Naive thymus-derived CD4-positive, alpha-beta T cell (primary cell): ENCODE measurements at regions of chr17 and their contacts with region 1.

Region 1: DNA sequence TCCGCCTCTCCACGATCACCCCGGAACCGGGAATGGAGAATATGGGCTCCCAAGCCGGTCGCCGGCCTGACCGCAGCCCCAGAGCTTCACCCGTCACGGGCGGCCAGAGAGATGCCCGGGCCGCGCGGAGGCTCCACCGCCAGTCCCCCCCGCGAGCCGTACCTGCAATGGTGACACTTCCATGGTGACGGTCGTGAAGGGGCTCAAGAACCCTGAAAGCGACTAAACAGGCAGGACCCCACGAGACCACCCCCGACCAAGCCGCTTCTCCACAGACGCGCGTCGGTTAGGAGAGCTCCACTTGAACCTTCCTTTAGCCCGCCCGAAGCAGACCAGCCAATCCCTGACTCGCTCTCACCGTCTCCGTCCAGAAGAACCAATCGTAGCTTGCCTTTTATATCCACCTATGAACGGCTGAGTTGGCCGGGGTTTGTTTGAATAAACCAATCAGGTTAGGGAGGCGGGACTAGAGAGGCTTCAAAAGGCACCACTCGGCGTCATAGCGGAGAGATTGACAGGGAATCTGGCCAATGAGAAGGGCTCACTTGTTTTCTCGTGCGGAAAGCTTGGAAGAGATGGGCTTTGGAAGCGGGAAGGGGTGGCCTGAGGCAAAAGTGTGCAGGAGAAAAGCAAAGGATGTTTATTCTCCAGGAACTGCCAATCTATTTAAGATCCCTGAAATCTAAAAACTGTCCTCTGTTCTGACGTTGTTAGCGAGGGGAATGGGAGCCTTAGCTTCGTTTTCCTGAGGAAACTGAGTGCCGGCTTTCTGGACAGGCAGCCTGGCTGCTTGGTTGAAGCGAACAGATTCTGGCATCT is at the start of gene TOP2A:
- DNase-seq: peak; percentile 92 to 98 (median 98)
- ATAC-seq: peak; percentile 100
- H3K4me3 ChIP-seq: peak within 1 kb of the TSS; percentile 96
- H3K4me3 Mint-ChIP-seq: peak within 1 kb of the TSS; percentile 87 to 99 (median 92)
- H3K27ac ChIP-seq: peak within 1 kb of the TSS; percentile 71
- H3K27ac Mint-ChIP-seq: peak within 1 kb of the TSS; percentile 75 to 97 (median 90)
- H3K4me1 ChIP-seq: peaks cover 0 to 16% of the 10 kb centered on the region in 2 donors
- H3K4me1 Mint-ChIP-seq: peaks cover 6 to 41% (median 23%) of the 10 kb centered on the region in 7 donors
- H3K27me3 ChIP-seq: peaks cover 0 to 5% of the 10 kb centered on the region in 2 donors
- H3K27me3 Mint-ChIP-seq: peaks cover 0 to 2% (median 0%) of the 10 kb centered on the region in 5 donors
- total RNA-seq, gene TOP2A: 0.54 to 273 (median 1.2) TPM

Region 2: GRCh38 chr17:40287494-40288369 is 130.1 kb before region 1 on chr17 and contains the start of gene CDC6:
- CTCF ChIA-PET with region 1: no interaction called
- POLR2A ChIA-PET with region 1: interaction called, 3 read pairs
- intact Hi-C with region 1: loop called in 1 of 2 experiments (anchors 5 kb)
- DNase-seq: peak; percentile 90 to 99 (median 98)
- ATAC-seq: peak; percentile 97
- H3K4me3 ChIP-seq: peak within 1 kb of the TSS; percentile 70
- H3K4me3 Mint-ChIP-seq: peak within 1 kb of the TSS; percentile 93 to 99 (median 96)
- H3K27ac ChIP-seq: peak within 1 kb of the TSS; percentile 63
- H3K27ac Mint-ChIP-seq: peak within 1 kb of the TSS; percentile 84 to 98 (median 91)
- H3K4me1 ChIP-seq: peaks cover 3 to 11% of the 10 kb centered on the region in 2 donors
- H3K4me1 Mint-ChIP-seq: peaks cover 8 to 41% (median 22%) of the 10 kb centered on the region in 7 donors
- H3K27me3 ChIP-seq: no peaks in the 10 kb centered on the region
- H3K27me3 Mint-ChIP-seq: no peaks in the 10 kb centered on the region
- total RNA-seq, gene CDC6: 0.51 to 73.6 (median 0.85) TPM

Region 3: DNA sequence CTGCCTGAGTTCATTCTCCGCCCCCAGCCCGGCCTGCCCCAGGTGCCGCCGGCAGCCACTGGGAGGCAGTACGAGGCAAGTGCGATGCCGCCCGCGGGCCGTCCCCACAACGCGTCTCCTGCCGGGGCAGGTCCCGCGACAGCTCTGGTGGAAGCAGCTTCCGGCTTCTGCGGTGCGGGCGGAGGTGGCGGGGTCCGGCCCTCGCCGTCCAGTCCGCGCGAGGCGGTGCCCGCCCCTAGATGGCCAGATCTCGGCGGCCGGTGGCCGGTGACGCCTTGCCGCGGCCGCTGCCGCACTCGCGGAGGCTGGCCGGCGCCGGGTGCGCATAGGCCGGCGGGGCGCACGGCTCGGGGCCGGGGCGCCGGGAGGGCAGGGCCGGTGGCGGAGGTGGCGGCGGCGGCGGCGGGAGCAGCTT is 55.1 kb before region 1 on chr17:
- CTCF ChIA-PET with region 1: interaction called, 4 read pairs
- POLR2A ChIA-PET with region 1: interaction called, 5 read pairs
- intact Hi-C with region 1: loop called (anchors 1 kb)
- DNase-seq: peak; percentile 60 to 90 (median 74)
- ATAC-seq: peak; percentile 88
- H3K4me3 ChIP-seq: peak overlapping the region; percentile 35
- H3K4me3 Mint-ChIP-seq: peak overlapping the region; percentile 10 to 87 (median 70)
- H3K27ac ChIP-seq: no peak overlapping the region
- H3K27ac Mint-ChIP-seq: peak overlapping the region in 1 of 9 donors; percentile 85
- H3K4me1 ChIP-seq: peaks cover 4 to 7% of the 10 kb centered on the region in 2 donors
- H3K4me1 Mint-ChIP-seq: peaks cover 4 to 37% (median 12%) of the 10 kb centered on the region in 7 donors
- H3K27me3 ChIP-seq: no peaks in the 10 kb centered on the region
- H3K27me3 Mint-ChIP-seq: peaks cover 0 to 23% (median 8%) of the 10 kb centered on the region in 5 donors

Region 4: DNA sequence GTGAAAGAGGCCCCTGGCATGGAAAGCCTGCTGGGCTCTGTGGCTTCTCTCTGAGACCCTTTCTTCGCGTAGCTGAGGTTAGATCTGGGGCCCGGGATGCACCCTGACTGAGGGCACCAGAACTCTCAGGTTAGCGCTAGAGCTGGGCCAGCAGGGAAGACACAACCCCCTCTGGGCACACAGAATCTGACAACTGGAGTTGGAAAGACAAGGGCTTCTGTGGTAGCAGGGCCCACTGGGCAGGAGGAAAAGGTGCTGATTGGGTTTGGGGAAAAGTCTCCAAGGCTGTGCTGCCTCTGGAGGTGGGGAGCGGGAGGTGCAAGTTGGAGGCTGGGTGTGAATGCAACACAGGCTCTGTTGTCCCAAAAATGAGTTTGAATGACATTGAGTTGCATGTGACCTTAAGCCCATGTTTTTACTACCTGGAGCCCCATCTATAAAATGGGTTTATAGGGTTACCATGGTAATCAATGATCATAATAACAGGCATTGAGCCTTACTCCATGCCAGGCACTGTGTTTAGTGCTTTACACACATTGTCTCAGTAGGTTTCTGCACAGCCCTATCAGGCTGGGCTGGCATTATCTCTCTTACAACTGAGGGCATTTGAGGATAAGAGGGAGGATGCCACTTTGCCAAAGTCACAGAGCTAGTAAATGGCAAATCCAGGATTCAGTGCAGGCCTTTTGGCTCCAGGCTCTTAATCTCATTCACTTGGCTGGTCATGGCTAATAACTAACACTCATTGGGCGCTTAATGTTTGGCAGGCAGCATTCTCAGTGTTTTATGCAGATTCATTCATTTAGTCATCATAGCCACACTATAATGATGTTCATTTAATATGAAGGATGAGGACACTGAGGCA is 16.0 kb after region 1 on chr17:
- CTCF ChIA-PET with region 1: interaction called, 12 read pairs
- POLR2A ChIA-PET with region 1: interaction called, 4 read pairs
- intact Hi-C with region 1: loop called in 1 of 2 experiments (anchors 2 kb)
- DNase-seq: no peak
- ATAC-seq: peak; percentile 59
- H3K4me3 ChIP-seq: no peak overlapping the region
- H3K4me3 Mint-ChIP-seq: no peak overlapping the region
- H3K27ac ChIP-seq: no peak overlapping the region
- H3K27ac Mint-ChIP-seq: peak overlapping the region in 2 of 9 donors; percentile 60 to 74
- H3K4me1 ChIP-seq: no peaks in the 10 kb centered on the region
- H3K4me1 Mint-ChIP-seq: peaks cover 0 to 21% (median 0%) of the 10 kb centered on the region in 7 donors
- H3K27me3 ChIP-seq: no peaks in the 10 kb centered on the region
- H3K27me3 Mint-ChIP-seq: peaks cover 0 to 13% (median 0%) of the 10 kb centered on the region in 5 donors

Region 5: DNA sequence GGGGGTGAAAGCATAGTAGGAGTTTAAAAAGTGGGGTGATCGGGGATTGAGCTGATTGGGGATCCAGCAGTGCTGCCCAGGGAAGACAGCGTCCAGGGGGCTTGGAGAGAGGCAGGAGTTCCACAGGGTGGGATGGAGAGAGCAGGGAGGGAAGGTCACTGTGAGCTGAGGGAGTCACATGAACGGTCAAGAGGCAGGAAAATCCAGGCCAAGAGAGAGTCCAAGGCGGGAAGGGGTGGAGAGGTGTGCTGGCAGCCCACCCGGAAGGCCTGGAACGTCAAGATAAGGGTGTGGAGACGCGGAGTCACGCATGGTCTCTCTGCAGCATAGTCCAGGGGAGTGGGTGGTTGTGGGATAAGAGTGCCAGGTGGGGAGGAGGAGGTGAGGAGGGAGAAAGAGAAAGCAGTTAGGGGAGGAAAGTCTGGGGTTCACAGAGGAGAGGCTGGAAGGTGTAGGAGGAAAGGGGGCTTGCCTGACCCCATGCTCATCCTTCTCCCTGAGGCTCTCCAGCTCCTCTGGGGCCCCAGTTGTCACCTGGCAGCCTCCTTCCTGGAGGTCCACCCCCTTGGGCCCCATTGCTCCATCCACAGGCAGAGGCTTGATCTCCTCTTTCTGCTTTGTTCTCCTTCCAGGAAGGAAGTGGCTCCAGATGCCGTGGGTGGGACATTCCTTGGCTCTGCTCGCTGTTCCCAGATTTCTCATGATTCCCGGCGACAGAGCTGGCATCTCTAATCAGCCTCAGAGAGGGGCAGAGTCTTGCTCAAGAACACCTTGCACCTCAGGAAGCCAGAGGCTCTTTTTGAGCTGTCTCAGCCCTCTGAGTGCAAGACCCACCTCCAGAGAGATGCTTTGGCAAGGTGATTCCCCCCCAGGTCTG is 118.7 kb after region 1 on chr17:
- CTCF ChIA-PET with region 1: interaction called, 34 read pairs
- POLR2A ChIA-PET with region 1: interaction called, 10 read pairs
- intact Hi-C with region 1: loop called (anchors 1 kb)
- DNase-seq: peak in 1 of 9 donors; percentile 7
- ATAC-seq: no peak
- H3K4me3 ChIP-seq: no peak overlapping the region
- H3K4me3 Mint-ChIP-seq: peak overlapping the region in 6 of 10 donors; percentile 8 to 43 (median 23)
- H3K27ac ChIP-seq: no peak overlapping the region
- H3K27ac Mint-ChIP-seq: peak overlapping the region; percentile 77 to 99 (median 96)
- H3K4me1 ChIP-seq: peaks cover 68 to 81% of the 10 kb centered on the region in 2 donors
- H3K4me1 Mint-ChIP-seq: peaks cover 64 to 100% (median 94%) of the 10 kb centered on the region in 7 donors
- H3K27me3 ChIP-seq: no peaks in the 10 kb centered on the region
- H3K27me3 Mint-ChIP-seq: peaks cover 0 to 3% (median 0%) of the 10 kb centered on the region in 5 donors